Naive thymus-derived CD4-positive, alpha-beta T cell (primary cell): ENCODE measurements at regions of chr19 and their contacts with region 1.

Region 1: GRCh38 chr19:48970923-48971395 is 5.8 kb downstream of the FTL start:
- DNase-seq: peak; percentile 57 to 81 (median 72)
- ATAC-seq: peak; percentile 85
- H3K4me3 ChIP-seq: no peak overlapping the region
- H3K4me3 Mint-ChIP-seq: peak overlapping the region in 1 of 10 donors; percentile 18
- H3K27ac ChIP-seq: no peak overlapping the region
- H3K27ac Mint-ChIP-seq: peak overlapping the region in 4 of 9 donors; percentile 26 to 77 (median 42)
- H3K4me1 ChIP-seq: peaks cover 8 to 11% of the 10 kb centered on the region in 2 donors
- H3K4me1 Mint-ChIP-seq: peaks cover 5 to 26% (median 20%) of the 10 kb centered on the region in 7 donors
- H3K27me3 ChIP-seq: no peaks in the 10 kb centered on the region
- H3K27me3 Mint-ChIP-seq: no peaks in the 10 kb centered on the region

Region 2: DNA sequence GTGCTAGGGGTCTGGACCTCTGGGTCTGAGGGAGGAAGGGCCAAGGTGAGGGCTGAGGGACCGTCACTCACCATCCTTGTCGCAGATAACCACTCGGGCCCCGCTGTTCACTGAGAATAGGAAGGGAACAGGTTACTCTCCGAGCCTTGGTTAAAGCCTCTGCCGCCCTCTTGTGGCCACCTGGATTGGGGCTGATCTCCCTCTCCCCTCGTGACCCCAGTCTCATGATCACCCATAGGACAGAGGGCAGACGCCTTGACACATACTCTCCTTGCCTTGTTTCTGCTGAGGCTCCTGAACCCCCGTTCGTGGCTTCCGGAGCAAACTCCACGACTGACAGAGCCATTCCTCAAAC is 135.2 kb before region 1 on chr19:
- CTCF ChIA-PET with region 1: interaction called, 10 read pairs
- POLR2A ChIA-PET with region 1: interaction called, 6 read pairs
- intact Hi-C with region 1: loop called (anchors 1 kb)
- DNase-seq: peak; percentile 81 to 93 (median 89)
- ATAC-seq: peak; percentile 95
- H3K4me3 ChIP-seq: peak overlapping the region; percentile 53
- H3K4me3 Mint-ChIP-seq: peak overlapping the region; percentile 85 to 94 (median 90)
- H3K27ac ChIP-seq: peak overlapping the region; percentile 54
- H3K27ac Mint-ChIP-seq: peak overlapping the region; percentile 48 to 96 (median 86)
- H3K4me1 ChIP-seq: peaks cover 12 to 16% of the 10 kb centered on the region in 2 donors
- H3K4me1 Mint-ChIP-seq: peaks cover 16 to 25% (median 23%) of the 10 kb centered on the region in 7 donors
- H3K27me3 ChIP-seq: peaks cover 0 to 5% of the 10 kb centered on the region in 2 donors
- H3K27me3 Mint-ChIP-seq: peaks cover 0 to 11% (median 0%) of the 10 kb centered on the region in 5 donors

Region 3: DNA sequence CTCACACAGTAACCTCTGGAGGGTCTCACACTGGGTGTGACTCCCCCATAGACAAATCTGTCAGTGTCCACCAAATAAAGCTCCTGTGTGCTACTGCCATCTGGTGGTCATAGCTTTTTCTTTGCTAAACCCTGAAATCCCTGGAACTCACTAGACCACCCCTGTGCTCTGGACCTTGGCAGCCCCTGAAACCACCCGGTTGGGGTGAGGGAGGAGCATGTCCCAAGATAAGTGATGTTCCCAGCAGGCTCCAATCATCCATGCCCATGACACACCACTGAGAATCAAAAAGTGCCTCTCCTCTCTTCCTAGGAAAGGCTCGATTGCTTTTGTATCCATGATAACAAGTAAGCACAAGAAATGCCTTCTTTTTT is 128.2 kb before region 1 on chr19:
- CTCF ChIA-PET with region 1: interaction called, 10 read pairs
- POLR2A ChIA-PET with region 1: interaction called, 6 read pairs
- intact Hi-C with region 1: loop called in 1 of 2 experiments (anchors 1 kb)
- DNase-seq: peak in 8 of 9 donors; percentile 37 to 62 (median 49)
- ATAC-seq: peak; percentile 67
- H3K4me3 ChIP-seq: no peak overlapping the region
- H3K4me3 Mint-ChIP-seq: peak overlapping the region in 1 of 10 donors; percentile 53
- H3K27ac ChIP-seq: no peak overlapping the region
- H3K27ac Mint-ChIP-seq: peak overlapping the region in 3 of 9 donors; percentile 44 to 53 (median 51)
- H3K4me1 ChIP-seq: no peaks in the 10 kb centered on the region
- H3K4me1 Mint-ChIP-seq: peaks cover 0 to 6% (median 3%) of the 10 kb centered on the region in 7 donors
- H3K27me3 ChIP-seq: no peaks in the 10 kb centered on the region
- H3K27me3 Mint-ChIP-seq: peaks cover 0 to 2% (median 0%) of the 10 kb centered on the region in 5 donors

Region 4: GRCh38 chr19:48933382-48933932 is 37.5 kb before region 1 on chr19 and contains the start of gene DHDH:
- CTCF ChIA-PET with region 1: interaction called, 10 read pairs
- POLR2A ChIA-PET with region 1: interaction called, 7 read pairs
- intact Hi-C with region 1: loop called in 1 of 2 experiments (anchors 1 kb)
- DNase-seq: peak; percentile 75 to 90 (median 87)
- ATAC-seq: peak; percentile 98
- H3K4me3 ChIP-seq: peak within 1 kb of the TSS; percentile 50
- H3K4me3 Mint-ChIP-seq: peak within 1 kb of the TSS; percentile 78 to 91 (median 86)
- H3K27ac ChIP-seq: peak within 1 kb of the TSS; percentile 57
- H3K27ac Mint-ChIP-seq: peak within 1 kb of the TSS; percentile 66 to 94 (median 91)
- H3K4me1 ChIP-seq: peaks cover 6 to 7% of the 10 kb centered on the region in 2 donors
- H3K4me1 Mint-ChIP-seq: peaks cover 7 to 17% (median 14%) of the 10 kb centered on the region in 7 donors
- H3K27me3 ChIP-seq: no peaks in the 10 kb centered on the region
- H3K27me3 Mint-ChIP-seq: peaks cover 0 to 16% (median 0%) of the 10 kb centered on the region in 5 donors
- total RNA-seq, gene DHDH: 1.1 to 1.7 (median 1.3) TPM

Region 5: DNA sequence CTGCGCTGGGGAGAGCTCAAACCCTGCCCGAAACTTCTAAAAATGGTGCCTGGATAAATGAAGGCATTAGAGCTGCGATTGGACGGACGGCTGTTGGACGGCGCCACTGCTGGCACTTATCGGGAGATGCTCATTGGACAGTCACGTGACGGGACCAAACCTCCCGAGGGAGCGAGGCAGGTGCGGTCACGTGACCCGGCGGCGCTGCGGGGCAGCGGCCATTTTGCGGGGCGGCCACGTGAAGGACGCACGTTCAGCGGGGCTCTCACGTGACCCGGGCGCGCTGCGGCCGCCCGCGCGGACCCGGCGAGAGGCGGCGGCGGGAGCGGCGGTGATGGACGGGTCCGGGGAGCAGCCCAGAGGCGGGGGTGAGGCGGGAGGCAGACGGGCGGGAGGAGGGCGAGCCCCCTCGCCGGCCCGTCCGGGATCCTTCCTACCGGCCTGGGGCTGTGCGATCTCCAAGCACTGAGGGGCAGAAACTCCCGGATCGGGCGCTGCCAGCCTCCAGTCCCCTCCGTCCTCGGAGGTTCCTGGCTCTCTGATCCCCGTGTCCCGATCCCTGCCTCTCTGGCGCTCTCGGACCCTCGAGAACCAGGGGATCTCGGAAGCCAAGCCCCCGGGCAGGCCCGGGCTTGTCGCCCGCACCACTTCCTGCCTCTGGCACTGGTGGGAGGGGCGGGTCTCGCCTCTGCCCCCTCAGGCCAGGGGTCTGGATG is 16.2 kb before region 1 on chr19 and contains the start of gene BAX:
- CTCF ChIA-PET with region 1: interaction called, 7 read pairs
- POLR2A ChIA-PET with region 1: interaction called, 58 read pairs
- intact Hi-C with region 1: loop called in 1 of 2 experiments (anchors 2 kb)
- DNase-seq: peak; percentile 59 to 96 (median 71)
- ATAC-seq: peak; percentile 92
- H3K4me3 ChIP-seq: peak within 1 kb of the TSS; percentile 65
- H3K4me3 Mint-ChIP-seq: peak within 1 kb of the TSS; percentile 88 to 95 (median 94)
- H3K27ac ChIP-seq: peak within 1 kb of the TSS; percentile 85
- H3K27ac Mint-ChIP-seq: peak within 1 kb of the TSS; percentile 77 to 94 (median 91)
- H3K4me1 ChIP-seq: peaks cover 12 to 19% of the 10 kb centered on the region in 2 donors
- H3K4me1 Mint-ChIP-seq: peaks cover 26 to 46% (median 38%) of the 10 kb centered on the region in 7 donors
- H3K27me3 ChIP-seq: no peaks in the 10 kb centered on the region
- H3K27me3 Mint-ChIP-seq: peaks cover 0 to 2% (median 0%) of the 10 kb centered on the region in 5 donors
- total RNA-seq, gene BAX: 78.7 to 355 (median 122) TPM